ENCODE measurements at regions of chr14 and their contacts with region 1.

Region 1: DNA sequence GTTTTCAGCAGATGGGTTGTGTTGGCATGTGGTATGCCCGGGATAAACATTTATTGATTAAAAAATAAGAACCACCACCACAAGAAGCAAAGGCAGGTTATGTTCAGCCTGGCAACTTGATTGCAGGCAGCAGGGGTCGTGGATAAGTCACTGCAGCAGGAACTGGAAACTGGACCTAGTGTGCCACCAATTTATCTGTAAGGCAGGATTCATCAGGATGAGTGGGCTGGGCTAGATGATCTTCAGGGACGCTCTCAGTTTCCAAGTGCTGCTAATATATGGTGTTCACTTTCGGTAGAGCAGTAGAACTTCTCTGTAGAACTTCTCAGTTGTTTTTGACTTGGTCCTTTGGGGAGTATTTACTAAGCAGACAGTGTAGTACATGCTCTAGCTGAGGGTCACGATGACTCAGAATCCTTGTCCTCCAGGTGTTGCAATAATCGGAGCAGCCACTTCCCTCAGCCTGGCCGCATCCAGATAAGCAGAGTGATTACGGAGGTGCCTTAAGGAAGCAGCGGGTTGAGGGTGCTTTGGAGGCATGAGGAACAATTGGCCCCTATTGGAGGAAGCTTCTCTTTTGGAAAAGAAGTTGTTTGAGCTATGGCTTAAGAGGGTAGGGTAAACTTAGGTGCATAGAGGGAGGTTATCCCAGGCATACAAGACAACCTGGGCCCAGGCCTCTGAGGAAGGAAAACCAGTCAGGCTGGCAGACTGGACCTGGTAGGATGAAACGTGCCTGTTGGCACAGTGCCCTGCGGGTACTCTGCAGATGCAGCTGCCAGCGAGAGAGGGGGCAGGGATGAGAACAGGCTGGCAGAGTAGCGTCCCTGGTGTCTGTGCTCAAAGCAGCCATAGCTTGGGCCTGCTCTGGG is 104.0 kb downstream of the GPR135 start:
- DNase-seq: peak; percentile 76
- ATAC-seq: peak; percentile 67 to 70

Region 2: DNA sequence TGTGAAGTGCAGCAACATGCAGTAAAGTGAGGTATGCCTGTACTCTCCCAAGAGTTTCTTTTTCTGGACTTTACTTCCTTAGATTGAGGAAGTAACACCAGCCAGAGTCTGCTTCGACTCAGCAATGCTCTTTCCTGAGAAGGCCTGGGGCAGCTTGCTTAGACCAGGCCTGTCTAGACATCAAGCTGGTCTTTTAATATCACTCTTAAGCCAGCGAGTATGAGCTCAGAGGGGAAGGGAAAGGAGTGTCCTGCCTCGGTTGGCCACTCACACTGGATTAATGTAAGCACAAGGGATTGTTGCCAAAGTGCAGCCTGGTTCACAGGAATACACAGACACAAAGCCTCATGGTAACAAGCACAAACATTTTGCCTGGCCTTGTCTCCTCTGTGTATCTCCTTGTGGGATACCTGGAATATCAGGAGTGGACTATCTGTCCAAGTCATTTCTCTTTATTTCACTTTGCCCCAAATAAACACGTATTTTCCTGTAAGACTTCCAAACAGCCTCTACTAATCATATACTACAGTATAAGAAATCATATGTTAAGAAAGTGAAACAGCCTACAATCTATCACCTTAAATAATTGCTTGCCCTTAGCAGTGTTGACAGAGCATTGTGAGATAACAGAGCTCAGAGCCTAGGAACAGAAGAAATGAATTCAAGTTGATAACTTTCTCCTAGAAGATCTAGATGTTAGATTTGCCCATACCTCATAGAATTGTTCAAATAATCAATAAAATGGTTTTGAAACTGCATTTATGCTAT is 293.8 kb before region 1 on chr14:
- intact Hi-C with region 1: no loop called
- DNase-seq: no peak
- ATAC-seq: no peak

Region 3: GRCh38 chr14:59086241-59086882 is 274.8 kb before region 1 on chr14:
- intact Hi-C with region 1: no loop called
- DNase-seq: no peak
- ATAC-seq: no peak

Region 4: DNA sequence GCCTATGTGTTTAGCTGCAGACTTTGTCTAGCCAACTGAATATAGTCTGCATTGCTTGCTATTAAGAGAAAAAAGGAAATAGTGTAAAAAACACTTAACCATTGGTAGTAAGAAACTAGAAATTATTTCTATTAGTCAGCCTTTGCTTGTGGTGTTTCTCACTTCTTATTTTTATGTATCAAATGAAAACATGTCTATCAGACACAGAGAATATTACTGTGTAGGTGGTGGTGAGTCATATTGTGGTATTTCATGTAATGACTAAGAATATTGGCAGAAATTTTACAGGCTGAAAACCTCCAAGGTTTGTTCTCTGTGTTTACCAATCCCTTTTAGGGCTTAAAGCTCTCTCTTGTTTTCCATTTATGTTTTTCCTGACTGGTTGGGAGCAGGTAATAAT is 85.5 kb before region 1 on chr14:
- intact Hi-C with region 1: loop called in 1 of 2 experiments (anchors 10 kb)
- DNase-seq: no peak
- ATAC-seq: peak; percentile 64 to 89

Region 5: GRCh38 chr14:59428581-59429012 is 67.4 kb after region 1 on chr14:
- intact Hi-C with region 1: loop called in 1 of 2 experiments (anchors 5 kb)
- DNase-seq: no peak
- ATAC-seq: peak in 1 of 2 donors; percentile 21

Measured in left cardiac atrium (tissue), 4 donors.